ENCODE measurements at regions of chr6 and their contacts with region 1.

Region 1: DNA sequence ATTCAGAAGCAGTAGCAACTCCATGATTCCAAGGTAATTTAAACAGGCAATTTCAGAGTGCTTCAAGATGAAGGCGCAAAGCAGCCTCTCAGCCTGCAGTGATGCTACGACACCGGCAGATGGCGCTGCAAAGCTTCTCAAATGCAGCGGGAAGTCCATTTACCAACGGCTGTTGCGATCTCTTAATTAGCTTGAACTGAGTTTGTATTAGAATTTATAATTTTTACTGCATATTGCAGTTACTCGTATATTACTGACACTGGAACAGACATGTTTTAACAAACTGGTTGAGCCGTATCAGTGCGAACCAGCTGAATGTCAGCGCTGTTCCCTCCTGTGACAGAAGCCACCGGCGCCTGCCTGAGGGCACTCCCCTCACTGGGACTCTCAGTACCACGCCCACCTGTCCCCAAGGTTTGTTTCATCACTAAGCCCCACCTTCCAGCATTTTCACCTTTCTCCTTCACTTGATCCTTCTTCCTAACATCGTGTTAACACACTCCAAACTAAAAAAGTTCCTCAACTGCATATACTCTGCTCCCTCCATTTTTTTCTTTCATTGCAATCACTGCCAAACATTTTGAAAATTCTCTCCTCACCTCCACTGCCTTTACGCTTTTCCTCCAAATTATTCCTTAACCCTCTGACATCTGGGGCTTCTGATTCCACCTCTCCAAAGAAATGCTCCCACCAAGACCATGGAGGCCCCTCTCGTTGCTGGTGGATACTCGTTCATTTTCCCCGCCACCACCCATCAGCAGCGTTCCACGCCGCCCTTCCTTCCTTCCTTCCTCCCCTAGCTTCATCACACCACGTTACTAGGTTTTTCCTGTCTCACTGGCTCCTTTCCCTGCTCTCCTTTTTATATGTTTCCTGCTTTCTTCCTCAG is 14.5 kb downstream of the GNL1 start:
- DNase-seq: peak; percentile 60 to 84 (median 81)
- ATAC-seq: peak; percentile 84
- H3K4me3 ChIP-seq: peak overlapping the region; percentile 64
- H3K4me3 Mint-ChIP-seq: peak overlapping the region; percentile 83 to 92 (median 86)
- H3K27ac ChIP-seq: peak overlapping the region; percentile 67
- H3K27ac Mint-ChIP-seq: peak overlapping the region; percentile 82 to 96 (median 93)
- H3K4me1 ChIP-seq: peaks cover 26 to 29% of the 10 kb centered on the region in 2 donors
- H3K4me1 Mint-ChIP-seq: peaks cover 29 to 38% (median 35%) of the 10 kb centered on the region in 7 donors
- H3K27me3 ChIP-seq: no peaks in the 10 kb centered on the region
- H3K27me3 Mint-ChIP-seq: peaks cover 0 to 3% (median 0%) of the 10 kb centered on the region in 5 donors

Region 2: GRCh38 chr6:30489081-30490025 is 52.4 kb before region 1 on chr6 and contains the start of gene HLA-E:
- CTCF ChIA-PET with region 1: interaction called, 263 read pairs
- POLR2A ChIA-PET with region 1: interaction called, 199 read pairs
- intact Hi-C with region 1: no loop called
- DNase-seq: peak; percentile 62 to 99 (median 95)
- ATAC-seq: peak; percentile 89
- H3K4me3 ChIP-seq: peak within 1 kb of the TSS; percentile 83
- H3K4me3 Mint-ChIP-seq: peak within 1 kb of the TSS; percentile 94 to 100 (median 99)
- H3K27ac ChIP-seq: peak within 1 kb of the TSS; percentile 97
- H3K27ac Mint-ChIP-seq: peak within 1 kb of the TSS; percentile 96 to 99 (median 99)
- H3K4me1 ChIP-seq: peaks cover 26 to 33% of the 10 kb centered on the region in 2 donors
- H3K4me1 Mint-ChIP-seq: peaks cover 33 to 61% (median 46%) of the 10 kb centered on the region in 7 donors
- H3K27me3 ChIP-seq: no peaks in the 10 kb centered on the region
- H3K27me3 Mint-ChIP-seq: peaks cover 0 to 7% (median 0%) of the 10 kb centered on the region in 5 donors
- total RNA-seq, gene HLA-E: 614 to 1,412 (median 1,095) TPM

Region 3: DNA sequence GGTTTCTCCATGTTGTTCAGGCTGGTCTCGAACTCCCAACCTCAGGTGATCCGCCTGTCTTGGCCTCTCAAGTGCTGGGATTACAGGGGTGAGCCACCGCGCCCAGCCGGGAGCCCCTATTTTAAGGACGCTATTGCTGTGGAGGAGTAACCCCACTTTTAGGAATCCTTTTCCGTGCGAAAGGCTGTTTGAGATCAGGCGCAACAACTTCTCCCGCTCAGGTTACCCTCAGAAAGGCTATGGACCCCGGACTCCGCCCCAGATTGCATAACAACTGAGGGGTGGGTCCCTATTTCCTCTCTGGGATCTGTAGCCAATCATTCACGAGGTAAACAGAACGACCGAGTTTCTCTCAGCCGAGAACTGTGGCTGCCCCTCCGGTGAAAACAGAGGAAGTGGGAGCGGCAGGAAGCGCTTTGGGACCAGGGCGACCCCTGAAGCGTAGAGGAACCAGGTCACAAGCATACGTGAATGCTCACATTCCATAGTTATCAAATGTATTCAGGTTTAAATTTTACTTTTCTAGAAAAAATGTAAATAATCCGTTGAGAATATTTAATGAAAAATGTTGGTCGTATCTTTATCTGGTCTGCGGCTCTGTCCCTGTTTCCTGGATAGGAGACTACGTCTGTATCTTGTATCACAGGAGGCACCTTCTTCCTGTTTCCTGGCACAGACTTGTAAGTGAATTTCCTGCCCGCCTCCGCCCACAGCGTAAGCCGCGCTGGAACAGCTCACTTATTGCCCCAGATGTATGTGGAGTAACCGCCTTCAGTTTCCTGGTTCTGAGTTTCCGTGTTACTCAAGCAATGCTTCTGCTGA is 25.6 kb before region 1 on chr6:
- CTCF ChIA-PET with region 1: interaction called, 48 read pairs
- POLR2A ChIA-PET with region 1: interaction called, 24 read pairs
- intact Hi-C with region 1: no loop called
- DNase-seq: peak; percentile 60 to 97 (median 95)
- ATAC-seq: peak; percentile 93
- H3K4me3 ChIP-seq: peak overlapping the region; percentile 64
- H3K4me3 Mint-ChIP-seq: peak overlapping the region; percentile 82 to 96 (median 89)
- H3K27ac ChIP-seq: peak overlapping the region; percentile 82
- H3K27ac Mint-ChIP-seq: peak overlapping the region; percentile 97 to 100 (median 99)
- H3K4me1 ChIP-seq: peaks cover 20 to 62% of the 10 kb centered on the region in 2 donors
- H3K4me1 Mint-ChIP-seq: peaks cover 31 to 91% (median 62%) of the 10 kb centered on the region in 7 donors
- H3K27me3 ChIP-seq: no peaks in the 10 kb centered on the region
- H3K27me3 Mint-ChIP-seq: no peaks in the 10 kb centered on the region

Region 4: DNA sequence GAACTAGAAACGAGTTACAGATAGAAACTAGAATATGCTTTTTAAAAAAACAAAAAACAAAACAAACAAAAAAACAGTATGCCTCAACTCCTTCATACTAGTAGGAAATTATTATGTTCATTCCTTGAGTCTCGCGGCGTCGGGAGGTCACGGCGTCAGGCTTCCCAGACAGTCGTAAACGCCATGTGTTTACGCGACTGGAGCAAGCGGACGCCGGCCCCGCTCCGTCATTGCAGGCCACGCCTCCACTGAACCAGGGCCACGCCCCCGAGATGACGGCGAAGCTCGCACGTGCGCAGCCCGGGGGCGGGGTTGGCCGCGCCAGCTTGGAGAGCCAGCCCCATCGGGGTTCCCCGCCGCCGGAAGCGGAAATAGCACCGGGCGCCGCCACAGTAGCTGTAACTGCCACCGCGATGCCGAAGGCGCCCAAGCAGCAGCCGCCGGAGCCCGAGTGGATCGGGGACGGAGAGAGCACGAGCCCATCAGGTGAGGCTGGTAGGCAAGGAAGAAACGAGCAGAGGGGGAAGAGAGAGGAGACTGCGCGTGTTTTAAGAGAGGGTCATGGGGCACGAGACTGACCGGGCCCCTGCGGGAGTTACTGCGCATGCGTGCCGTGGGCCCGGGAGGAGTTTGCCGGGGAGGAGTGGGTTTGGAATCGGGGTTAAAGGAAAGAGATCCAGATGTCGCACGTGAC is 29.5 kb after region 1 on chr6 and contains the start of gene ABCF1:
- CTCF ChIA-PET with region 1: interaction called, 6 read pairs
- POLR2A ChIA-PET with region 1: interaction called, 25 read pairs
- intact Hi-C with region 1: loop called in 1 of 2 experiments (anchors 1 kb)
- DNase-seq: peak; percentile 98 to 100 (median 99)
- ATAC-seq: peak; percentile 99
- H3K4me3 ChIP-seq: peak within 1 kb of the TSS; percentile 94
- H3K4me3 Mint-ChIP-seq: peak within 1 kb of the TSS; percentile 94 to 100 (median 98)
- H3K27ac ChIP-seq: peak within 1 kb of the TSS; percentile 98
- H3K27ac Mint-ChIP-seq: peak within 1 kb of the TSS; percentile 96 to 100 (median 99)
- H3K4me1 ChIP-seq: peaks cover 33 to 38% of the 10 kb centered on the region in 2 donors
- H3K4me1 Mint-ChIP-seq: peaks cover 55 to 79% (median 64%) of the 10 kb centered on the region in 7 donors
- H3K27me3 ChIP-seq: no peaks in the 10 kb centered on the region
- H3K27me3 Mint-ChIP-seq: peaks cover 0 to 4% (median 0%) of the 10 kb centered on the region in 5 donors
- total RNA-seq, gene ABCF1: 65.1 to 116 (median 86.6) TPM

Region 5: DNA sequence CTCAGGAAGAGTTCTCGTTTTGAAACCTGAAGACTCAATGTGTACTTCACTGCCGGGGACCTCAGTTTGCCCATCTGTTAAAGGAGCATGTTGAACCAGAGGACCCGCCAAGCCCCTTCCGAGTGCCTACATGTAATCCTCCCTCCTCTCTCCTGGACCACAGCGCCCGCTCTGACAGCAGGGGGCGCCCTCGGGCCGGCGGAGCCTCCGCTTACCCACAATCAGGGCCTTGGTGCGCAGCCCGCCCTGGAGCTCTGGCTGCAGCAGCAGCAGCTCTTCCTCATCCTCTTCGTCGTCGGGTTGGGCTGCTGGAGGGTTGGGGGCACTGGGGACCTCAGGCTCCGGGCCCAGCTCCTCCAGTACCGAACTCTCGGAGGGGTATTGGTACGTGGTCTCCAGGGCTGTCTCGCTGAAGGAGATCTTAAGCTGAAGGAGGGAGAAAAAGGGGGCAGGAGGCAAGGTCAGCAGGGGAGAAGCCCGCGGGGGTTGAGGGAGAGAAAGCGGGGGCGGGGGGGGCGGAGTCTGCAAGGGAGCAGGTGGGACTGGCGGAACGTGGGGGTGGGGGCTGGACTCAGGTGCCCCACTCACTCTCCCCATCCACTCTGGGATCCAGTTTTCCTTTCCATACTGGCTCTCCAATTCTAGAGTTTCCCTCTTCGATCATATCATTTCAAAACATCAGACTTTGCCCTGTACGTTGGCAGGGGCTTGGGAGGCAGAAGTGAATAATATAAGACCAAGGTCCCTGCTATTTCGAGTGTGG is 137.4 kb after region 1 on chr6:
- CTCF ChIA-PET with region 1: interaction called, 10 read pairs
- POLR2A ChIA-PET with region 1: interaction called, 3 read pairs
- intact Hi-C with region 1: no loop called
- DNase-seq: peak; percentile 86 to 97 (median 92)
- ATAC-seq: peak; percentile 65
- H3K4me3 ChIP-seq: peak overlapping the region; percentile 98
- H3K4me3 Mint-ChIP-seq: peak overlapping the region; percentile 90 to 100 (median 97)
- H3K27ac ChIP-seq: peak overlapping the region; percentile 95
- H3K27ac Mint-ChIP-seq: peak overlapping the region; percentile 85 to 99 (median 97)
- H3K4me1 ChIP-seq: peaks cover 5 to 24% of the 10 kb centered on the region in 2 donors
- H3K4me1 Mint-ChIP-seq: peaks cover 20 to 47% (median 38%) of the 10 kb centered on the region in 7 donors
- H3K27me3 ChIP-seq: no peaks in the 10 kb centered on the region
- H3K27me3 Mint-ChIP-seq: no peaks in the 10 kb centered on the region

Region 6: GRCh38 chr6:31087494-31088089 is 545.8 kb after region 1 on chr6:
- CTCF ChIA-PET with region 1: no interaction called
- POLR2A ChIA-PET with region 1: no interaction called
- intact Hi-C with region 1: loop called (anchors 1 to 5 kb)
- DNase-seq: peak; percentile 66 to 89 (median 80)
- ATAC-seq: peak; percentile 100
- H3K4me3 ChIP-seq: no peak overlapping the region
- H3K4me3 Mint-ChIP-seq: no peak overlapping the region
- H3K27ac ChIP-seq: no peak overlapping the region
- H3K27ac Mint-ChIP-seq: peak overlapping the region in 4 of 9 donors; percentile 9 to 73 (median 46)
- H3K4me1 ChIP-seq: no peaks in the 10 kb centered on the region
- H3K4me1 Mint-ChIP-seq: peaks cover 6 to 14% (median 10%) of the 10 kb centered on the region in 7 donors
- H3K27me3 ChIP-seq: no peaks in the 10 kb centered on the region
- H3K27me3 Mint-ChIP-seq: peaks cover 0 to 21% (median 0%) of the 10 kb centered on the region in 5 donors

Region 7: GRCh38 chr6:31128093-31128676 is 586.4 kb after region 1 on chr6:
- CTCF ChIA-PET with region 1: no interaction called
- POLR2A ChIA-PET with region 1: no interaction called
- intact Hi-C with region 1: no loop called
- DNase-seq: peak; percentile 29 to 79 (median 55)
- ATAC-seq: peak; percentile 87
- H3K4me3 ChIP-seq: no peak overlapping the region
- H3K4me3 Mint-ChIP-seq: no peak overlapping the region
- H3K27ac ChIP-seq: no peak overlapping the region
- H3K27ac Mint-ChIP-seq: peak overlapping the region in 2 of 9 donors; percentile 0 to 1
- H3K4me1 ChIP-seq: no peaks in the 10 kb centered on the region
- H3K4me1 Mint-ChIP-seq: peaks cover 5 to 8% (median 6%) of the 10 kb centered on the region in 7 donors
- H3K27me3 ChIP-seq: no peaks in the 10 kb centered on the region
- H3K27me3 Mint-ChIP-seq: peaks cover 0 to 17% (median 5%) of the 10 kb centered on the region in 5 donors

Measured in naive thymus-derived CD4-positive, alpha-beta T cell (primary cell).